ENCODE measurements at regions of chr10 and their contacts with region 1.

Region 1: GRCh38 chr10:78029269-78030226 is at the start of gene POLR3A:
- DNase-seq: peak; percentile 93 to 96
- H3K4me3 ChIP-seq: peak within 1 kb of the TSS; percentile 74
- H3K27ac ChIP-seq: peak within 1 kb of the TSS; percentile 28
- H3K4me1 ChIP-seq: peaks cover 38% of the 10 kb centered on the region
- H3K27me3 ChIP-seq: no peaks in the 10 kb centered on the region
- CTCF ChIP-seq: peak; percentile 87
- total RNA-seq, gene POLR3A: 13.1 and 14.9 TPM in 2 replicates

Region 2: GRCh38 chr10:77165445-77166208 is 863.9 kb before region 1 on chr10:
- CTCF ChIA-PET with region 1: no interaction called
- POLR2A ChIA-PET with region 1: no interaction called
- intact Hi-C with region 1: loop called (anchors 10 kb)
- DNase-seq: peak; percentile 49 to 54
- H3K4me3 ChIP-seq: no peak overlapping the region
- H3K27ac ChIP-seq: no peak overlapping the region
- H3K4me1 ChIP-seq: peaks cover 60% of the 10 kb centered on the region
- H3K27me3 ChIP-seq: no peaks in the 10 kb centered on the region
- CTCF ChIP-seq: peak; percentile 96

Region 3: DNA sequence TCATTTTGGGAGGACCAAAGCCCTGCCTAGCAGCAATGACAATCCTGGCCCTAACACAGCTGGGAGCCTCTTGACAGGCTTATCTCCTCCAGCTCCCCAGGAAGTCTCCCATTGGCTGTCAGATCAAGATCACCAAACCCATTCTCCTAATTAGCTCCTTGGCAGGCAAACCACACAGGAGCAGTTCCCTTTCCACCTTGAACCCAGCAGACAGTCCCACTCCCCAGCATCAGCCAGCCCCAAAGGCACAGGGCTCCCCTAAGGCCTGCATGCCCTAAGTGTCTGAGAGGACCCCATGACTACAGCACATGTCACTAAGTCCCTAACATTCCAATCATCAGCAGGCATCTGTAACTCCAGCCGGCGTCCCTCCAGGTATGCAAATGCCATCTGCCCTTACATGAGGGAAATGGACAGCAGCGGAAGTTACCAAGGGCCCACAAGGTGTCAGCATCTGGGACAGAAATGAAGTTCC is 740.5 kb before region 1 on chr10:
- CTCF ChIA-PET with region 1: interaction called, 10 read pairs
- POLR2A ChIA-PET with region 1: no interaction called
- intact Hi-C with region 1: no loop called
- DNase-seq: no peak
- H3K4me3 ChIP-seq: no peak overlapping the region
- H3K27ac ChIP-seq: no peak overlapping the region
- H3K4me1 ChIP-seq: peaks cover 33% of the 10 kb centered on the region
- H3K27me3 ChIP-seq: no peaks in the 10 kb centered on the region
- CTCF ChIP-seq: no peak

Region 4: GRCh38 chr10:77710759-77711682 is 318.5 kb before region 1 on chr10:
- CTCF ChIA-PET with region 1: interaction called, 3 read pairs
- POLR2A ChIA-PET with region 1: no interaction called
- intact Hi-C with region 1: loop called (anchors 5 kb)
- DNase-seq: peak in 1 of 2 experiments; percentile 73
- H3K4me3 ChIP-seq: peak overlapping the region; percentile 27; the same call in 1 of the 2 replicates
- H3K27ac ChIP-seq: no peak overlapping the region
- H3K4me1 ChIP-seq: no peaks in the 10 kb centered on the region
- H3K27me3 ChIP-seq: no peaks in the 10 kb centered on the region
- CTCF ChIP-seq: peak; percentile 98

Region 5: GRCh38 chr10:77907900-77908717 is 121.4 kb before region 1 on chr10:
- CTCF ChIA-PET with region 1: interaction called, 3 read pairs
- POLR2A ChIA-PET with region 1: no interaction called
- intact Hi-C with region 1: loop called (anchors 5 kb)
- DNase-seq: no peak
- H3K4me3 ChIP-seq: no peak overlapping the region
- H3K27ac ChIP-seq: no peak overlapping the region
- H3K4me1 ChIP-seq: peaks cover 27% of the 10 kb centered on the region
- H3K27me3 ChIP-seq: no peaks in the 10 kb centered on the region
- CTCF ChIP-seq: peak; percentile 47

Region 6: DNA sequence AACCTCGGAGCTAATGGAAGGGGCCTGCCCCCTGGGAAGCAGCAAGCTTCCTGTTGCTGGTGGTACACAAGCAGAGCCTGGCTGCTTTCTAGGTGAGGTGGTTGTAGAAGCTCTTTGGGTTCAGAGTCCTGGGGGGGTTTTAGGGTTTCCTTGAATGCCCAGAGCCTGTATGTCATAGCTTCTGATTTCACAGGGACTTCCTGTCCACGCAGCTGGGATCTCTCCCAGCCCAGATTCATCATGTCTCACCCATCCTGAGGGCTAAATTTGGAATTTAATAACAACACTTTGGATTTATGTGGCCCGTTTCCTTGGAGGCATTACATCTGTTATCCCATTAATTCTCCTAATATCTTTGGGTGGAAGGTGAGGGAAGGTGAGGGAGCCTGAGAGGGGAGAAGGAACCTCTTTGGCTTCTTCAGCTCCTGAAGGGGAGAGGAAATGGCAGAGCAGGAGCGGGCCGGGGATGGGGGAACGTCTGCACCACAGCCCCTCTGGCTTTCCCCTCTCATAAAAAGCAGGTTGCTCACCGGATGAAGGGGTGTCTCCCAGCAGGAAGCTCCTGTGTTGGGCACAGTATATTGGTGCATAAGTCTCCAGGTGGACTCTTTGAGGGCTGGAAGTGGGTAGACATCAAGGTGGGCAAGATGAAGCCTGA is 23.8 kb after region 1 on chr10:
- CTCF ChIA-PET with region 1: no interaction called
- POLR2A ChIA-PET with region 1: no interaction called
- intact Hi-C with region 1: no loop called
- DNase-seq: no peak
- H3K4me3 ChIP-seq: no peak overlapping the region
- H3K27ac ChIP-seq: no peak overlapping the region
- H3K4me1 ChIP-seq: no peaks in the 10 kb centered on the region
- H3K27me3 ChIP-seq: no peaks in the 10 kb centered on the region
- CTCF ChIP-seq: no peak

Region 7: GRCh38 chr10:78176328-78177317 is 147.1 kb after region 1 on chr10:
- CTCF ChIA-PET with region 1: interaction called, 11 read pairs
- POLR2A ChIA-PET with region 1: no interaction called
- intact Hi-C with region 1: no loop called
- DNase-seq: peak in 1 of 2 experiments; percentile 26
- H3K4me3 ChIP-seq: no peak overlapping the region
- H3K27ac ChIP-seq: no peak overlapping the region
- H3K4me1 ChIP-seq: no peaks in the 10 kb centered on the region
- H3K27me3 ChIP-seq: peaks cover 90% of the 10 kb centered on the region
- CTCF ChIP-seq: no peak

Region 8: DNA sequence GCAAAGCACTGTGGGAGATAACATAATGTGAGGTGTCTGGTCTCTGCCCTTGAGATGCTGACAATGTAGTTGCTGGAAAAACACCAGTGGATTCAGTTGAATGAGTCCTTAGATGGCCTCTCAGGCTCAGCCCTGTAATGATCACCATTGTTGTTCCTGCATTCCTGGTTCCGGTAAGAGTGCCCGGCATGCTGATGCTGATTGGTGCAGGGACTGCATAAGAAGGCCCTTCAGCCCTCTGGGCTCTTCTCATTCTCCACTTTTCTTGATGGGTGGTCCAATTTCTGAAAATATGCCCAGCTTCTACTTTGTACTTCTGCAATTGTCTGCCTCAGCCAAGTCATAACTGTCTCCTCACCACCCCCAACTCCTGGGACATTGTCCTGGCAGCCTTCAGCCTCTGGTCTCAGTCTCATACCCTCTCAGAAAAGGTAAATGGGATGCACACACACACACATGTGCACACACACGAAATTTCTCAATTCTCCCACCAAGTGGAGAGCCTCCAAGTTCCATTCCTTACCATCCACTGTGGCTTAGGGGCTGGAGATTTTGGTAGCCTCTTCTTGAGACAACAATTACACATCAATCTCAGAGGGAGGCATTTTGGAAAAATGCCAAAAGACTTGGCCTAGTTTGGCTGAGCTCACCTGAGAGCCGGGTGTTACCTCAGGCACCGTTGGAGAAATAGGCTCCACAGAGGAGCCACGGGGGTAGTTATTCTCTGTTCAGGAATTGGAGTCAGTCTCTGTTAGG is 319.0 kb after region 1 on chr10:
- CTCF ChIA-PET with region 1: no interaction called
- POLR2A ChIA-PET with region 1: no interaction called
- intact Hi-C with region 1: no loop called
- DNase-seq: no peak
- H3K4me3 ChIP-seq: no peak overlapping the region
- H3K27ac ChIP-seq: no peak overlapping the region
- H3K4me1 ChIP-seq: no peaks in the 10 kb centered on the region
- H3K27me3 ChIP-seq: peaks cover 9% of the 10 kb centered on the region; the same call in 1 of the 2 replicates
- CTCF ChIP-seq: no peak

Measured in PC-9 (cell line).